ENCODE measurements at regions of chr12 and their contacts with region 1.

Region 1: GRCh38 chr12:118404876-118405521 is 28.6 kb downstream of the SUDS3 start:
- DNase-seq: peak; percentile 77
- H3K4me3 ChIP-seq: no peak overlapping the region
- H3K27ac ChIP-seq: no peak overlapping the region
- H3K4me1 ChIP-seq: no peaks in the 10 kb centered on the region
- H3K27me3 ChIP-seq: no peaks in the 10 kb centered on the region
- CTCF ChIP-seq: peak; percentile 55 to 69
- POLR2A ChIP-seq: no peak

Region 2: DNA sequence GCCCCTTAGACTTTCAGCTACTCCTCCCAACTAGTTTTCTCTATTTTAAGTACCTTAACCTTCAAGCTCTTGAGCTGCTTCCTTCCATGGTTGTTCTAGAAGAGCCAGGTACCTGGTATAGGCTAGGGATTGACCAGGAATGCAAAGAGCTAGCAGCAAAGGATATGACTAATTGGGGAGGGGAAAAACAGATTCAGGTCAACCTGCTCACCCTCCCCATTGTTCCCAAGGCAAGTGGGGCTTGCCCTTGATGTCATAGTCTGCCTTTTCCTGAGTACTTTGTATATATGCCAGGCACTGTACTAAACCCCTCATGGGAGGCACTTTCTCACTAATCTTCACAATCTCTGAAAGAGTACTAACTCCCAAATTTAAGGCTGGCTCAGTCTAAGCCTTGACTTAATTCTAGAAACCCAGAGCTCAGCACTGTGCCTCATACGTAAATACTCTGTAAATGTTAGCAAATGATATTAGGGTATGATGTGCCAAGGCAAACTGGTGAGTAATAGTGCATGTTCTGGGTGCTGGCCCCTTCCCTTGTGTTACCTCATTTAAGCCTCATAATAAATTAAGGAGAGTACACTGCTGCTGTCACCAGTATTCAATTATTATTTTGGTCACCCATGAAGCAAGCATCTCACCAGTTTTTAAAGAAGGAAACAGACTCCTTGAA is 13.5 kb after region 1 on chr12:
- CTCF ChIA-PET with region 1: interaction called, 11 read pairs
- POLR2A ChIA-PET with region 1: no interaction called
- dilution Hi-C with region 1: no loop called
- intact Hi-C with region 1: no loop called
- DNase-seq: peak; percentile 66
- H3K4me3 ChIP-seq: no peak overlapping the region
- H3K27ac ChIP-seq: peak overlapping the region; percentile 13
- H3K4me1 ChIP-seq: peaks cover 11% of the 10 kb centered on the region
- H3K27me3 ChIP-seq: no peaks in the 10 kb centered on the region
- CTCF ChIP-seq: no peak
- POLR2A ChIP-seq: no peak

Region 3: DNA sequence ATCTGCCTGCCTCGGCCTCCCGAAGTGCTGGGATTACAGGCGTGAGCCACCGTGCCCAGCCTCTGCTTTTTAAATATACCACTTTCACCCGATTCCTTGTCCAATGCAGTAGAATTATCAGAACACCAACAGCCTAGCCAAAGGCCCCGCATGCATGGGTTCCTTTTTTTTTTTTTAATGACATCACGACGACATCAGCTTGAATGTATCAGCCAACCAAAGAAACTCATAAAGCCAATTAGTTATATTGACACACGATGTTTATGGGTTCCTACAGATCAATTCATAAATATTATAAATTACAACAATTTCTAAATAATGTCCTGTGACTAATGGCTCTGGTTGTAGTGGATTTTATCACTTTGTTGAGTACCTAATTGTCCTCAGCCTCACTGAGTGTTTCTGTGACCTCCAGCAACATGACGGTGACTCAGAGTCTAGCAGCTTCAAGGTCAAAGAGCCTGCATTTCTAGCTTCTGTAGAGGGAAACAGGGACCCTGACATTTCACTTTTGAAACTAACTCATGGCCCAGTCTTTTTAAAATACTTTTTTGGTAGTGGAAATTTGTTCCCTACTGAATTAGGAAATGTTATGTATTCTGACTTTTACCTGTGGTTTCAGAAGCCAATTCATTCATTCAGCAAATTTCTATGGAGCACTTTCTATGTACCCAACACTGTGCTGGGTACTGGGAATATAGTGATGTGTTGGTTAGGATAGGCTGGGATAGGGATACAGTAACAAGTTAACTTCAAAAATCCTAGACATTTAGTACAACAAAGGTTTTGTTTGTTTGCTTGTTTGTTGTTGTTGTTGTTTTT is 115.4 kb after region 1 on chr12:
- CTCF ChIA-PET with region 1: no interaction called
- POLR2A ChIA-PET with region 1: no interaction called
- dilution Hi-C with region 1: no loop called
- intact Hi-C with region 1: no loop called
- DNase-seq: no peak
- H3K4me3 ChIP-seq: no peak overlapping the region
- H3K27ac ChIP-seq: no peak overlapping the region
- H3K4me1 ChIP-seq: no peaks in the 10 kb centered on the region
- H3K27me3 ChIP-seq: no peaks in the 10 kb centered on the region
- CTCF ChIP-seq: no peak
- POLR2A ChIP-seq: no peak

Region 4: DNA sequence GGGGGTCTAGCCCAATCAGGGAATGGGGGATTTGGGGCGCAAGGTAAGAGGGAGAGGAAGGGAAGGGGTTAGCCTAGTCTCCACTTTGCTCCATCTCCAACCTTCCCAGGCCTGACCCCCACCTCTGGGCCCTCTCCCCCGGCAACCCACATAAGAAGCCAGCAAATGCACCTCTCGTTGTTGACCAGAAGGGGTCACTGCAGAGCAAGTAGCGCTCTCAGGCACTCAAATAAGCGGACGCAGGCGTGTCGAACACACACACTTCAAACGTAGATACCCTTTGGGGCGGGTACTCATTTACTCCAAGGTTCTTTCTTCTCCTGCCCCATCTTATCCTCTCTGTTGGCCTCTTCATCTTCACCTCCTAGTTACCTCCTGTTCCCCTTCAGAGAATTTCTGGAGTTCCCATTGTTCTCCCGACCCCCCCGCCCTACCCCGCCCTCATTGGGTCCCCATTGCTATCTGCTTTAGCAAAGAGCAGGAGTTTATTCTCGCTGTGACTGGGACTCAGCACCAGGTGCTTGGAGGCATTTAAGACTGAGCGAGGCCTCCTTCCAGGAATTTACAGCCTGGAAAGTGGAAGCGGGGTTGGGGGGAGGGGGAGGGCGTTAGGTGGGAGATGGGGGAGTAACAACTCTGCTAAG is 574.9 kb after region 1 on chr12:
- CTCF ChIA-PET with region 1: no interaction called
- POLR2A ChIA-PET with region 1: no interaction called
- dilution Hi-C with region 1: no loop called
- intact Hi-C with region 1: loop called (anchors 1 kb)
- DNase-seq: peak; percentile 29
- H3K4me3 ChIP-seq: no peak overlapping the region
- H3K27ac ChIP-seq: no peak overlapping the region
- H3K4me1 ChIP-seq: no peaks in the 10 kb centered on the region
- H3K27me3 ChIP-seq: no peaks in the 10 kb centered on the region
- CTCF ChIP-seq: peak; percentile 60 to 73
- POLR2A ChIP-seq: no peak

Region 5: GRCh38 chr12:119115296-119115905 is 710.4 kb after region 1 on chr12:
- CTCF ChIA-PET with region 1: interaction called, 3 read pairs
- POLR2A ChIA-PET with region 1: no interaction called
- dilution Hi-C with region 1: no loop called
- intact Hi-C with region 1: loop called (anchors 1 kb)
- DNase-seq: peak; percentile 43
- H3K4me3 ChIP-seq: no peak overlapping the region
- H3K27ac ChIP-seq: no peak overlapping the region
- H3K4me1 ChIP-seq: no peaks in the 10 kb centered on the region
- H3K27me3 ChIP-seq: no peaks in the 10 kb centered on the region
- CTCF ChIP-seq: peak; percentile 68 to 75
- POLR2A ChIP-seq: no peak

Region 6: DNA sequence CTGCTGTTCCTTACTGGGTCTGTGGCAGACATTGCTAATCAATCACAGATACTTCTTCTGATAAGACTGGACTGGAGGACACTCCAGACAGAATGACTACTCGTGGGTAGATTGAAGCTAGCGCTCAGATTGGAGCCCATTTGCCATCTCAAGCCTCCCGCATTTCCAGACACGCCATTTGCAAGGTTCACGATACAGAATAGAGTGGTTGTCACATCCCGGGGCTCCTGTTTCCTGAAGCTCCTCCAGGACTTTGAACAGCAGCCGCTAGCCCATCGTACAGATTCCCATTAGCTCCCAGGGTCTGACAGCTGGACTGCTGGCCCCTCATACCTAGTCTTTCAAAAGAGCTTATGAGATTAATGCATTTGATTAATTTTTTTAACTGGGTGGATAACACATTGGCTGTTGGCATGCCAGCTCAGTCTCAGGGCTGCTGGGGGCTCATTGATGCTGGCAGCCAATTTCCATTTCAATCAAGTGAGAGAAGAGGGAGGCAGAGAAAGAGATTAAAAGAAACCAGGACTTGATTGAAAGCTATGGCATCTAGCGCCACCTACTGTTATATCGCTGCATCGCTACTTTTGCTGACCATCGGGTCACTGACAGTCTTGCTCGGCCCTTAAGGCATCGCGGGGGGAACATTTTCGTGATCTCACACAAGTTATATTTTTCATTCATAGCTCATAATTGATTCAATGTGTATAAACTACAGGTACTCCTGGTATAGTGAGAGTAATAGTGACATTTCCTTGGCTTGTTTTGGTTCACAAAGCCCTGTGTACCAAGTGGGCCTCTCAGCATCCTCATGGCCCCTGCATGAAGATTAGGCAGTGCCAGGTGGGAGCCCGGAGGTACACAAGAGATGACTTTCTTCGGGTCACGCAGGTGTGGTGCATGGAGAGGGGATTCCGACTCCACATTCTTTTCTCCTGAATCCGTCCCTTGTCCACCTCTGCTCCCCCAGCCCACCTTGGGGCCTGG is 1008.1 kb after region 1 on chr12:
- CTCF ChIA-PET with region 1: interaction called, 84 read pairs
- POLR2A ChIA-PET with region 1: no interaction called
- dilution Hi-C with region 1: no loop called
- intact Hi-C with region 1: loop called (anchors 1 kb)
- DNase-seq: peak; percentile 68
- H3K4me3 ChIP-seq: no peak overlapping the region
- H3K27ac ChIP-seq: no peak overlapping the region
- H3K4me1 ChIP-seq: no peaks in the 10 kb centered on the region
- H3K27me3 ChIP-seq: no peaks in the 10 kb centered on the region
- CTCF ChIP-seq: peak; percentile 79 to 80
- POLR2A ChIP-seq: no peak

Region 7: DNA sequence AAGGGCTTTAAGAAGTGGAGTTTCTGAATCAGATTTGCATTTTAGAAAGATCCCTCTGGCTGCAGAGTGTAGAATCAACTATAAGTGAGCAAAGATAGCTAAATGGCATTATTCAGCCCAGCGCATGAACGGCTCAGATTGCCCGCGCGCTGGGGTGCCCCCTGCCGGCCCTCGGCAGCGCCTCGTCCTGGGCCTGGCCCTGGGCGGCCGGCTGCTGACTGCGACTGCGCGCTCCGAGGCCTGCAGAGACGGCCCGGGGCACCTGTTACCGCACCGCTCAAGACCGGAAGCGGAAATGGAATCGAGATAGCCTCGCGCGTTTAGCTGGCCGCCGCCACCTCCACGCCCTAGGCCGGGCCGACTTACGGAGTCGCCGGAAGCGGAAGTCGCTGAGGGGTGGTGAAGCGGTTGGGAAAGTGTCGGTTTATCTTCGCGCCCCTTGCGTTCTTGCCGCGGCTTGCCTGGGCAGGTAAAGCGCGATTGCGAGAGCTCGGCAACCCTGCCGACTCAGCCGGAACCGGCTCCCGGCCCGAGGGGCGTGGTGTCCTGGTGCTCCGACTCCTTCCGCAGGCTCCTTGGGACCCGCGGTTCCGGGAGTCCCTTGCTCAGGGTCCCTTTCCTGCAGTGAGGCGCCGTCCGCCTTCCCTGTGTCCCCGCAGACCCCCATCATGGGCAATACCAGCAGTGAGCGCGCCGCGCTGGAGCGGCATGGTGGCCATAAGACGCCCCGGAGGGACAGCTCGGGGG is 1262.8 kb after region 1 on chr12 and contains the start of gene PRKAB1:
- CTCF ChIA-PET with region 1: interaction called, 3 read pairs
- POLR2A ChIA-PET with region 1: no interaction called
- dilution Hi-C with region 1: no loop called
- intact Hi-C with region 1: loop called (anchors 10 kb)
- DNase-seq: peak; percentile 93
- H3K4me3 ChIP-seq: peak within 1 kb of the TSS; percentile 69 to 84 (median 76)
- H3K27ac ChIP-seq: peak within 1 kb of the TSS; percentile 32
- H3K4me1 ChIP-seq: peaks cover 26% of the 10 kb centered on the region
- H3K27me3 ChIP-seq: no peaks in the 10 kb centered on the region
- CTCF ChIP-seq: peak; percentile 90 to 98
- POLR2A ChIP-seq: peak; percentile 46
- total RNA-seq, gene PRKAB1: 21.9 and 23.1 TPM in 2 replicates

Measured in endothelial cell of umbilical vein (primary cell).